Mammary epithelial cell (primary cell): ENCODE measurements at regions of chr10 and their contacts with region 1.

Region 1: GRCh38 chr10:53314876-53315275 is 542.3 kb upstream of the MBL2 start:
- DNase-seq: peak; percentile 87
- H3K4me3 ChIP-seq: no peak overlapping the region
- H3K27ac ChIP-seq: peak overlapping the region; percentile 39
- H3K4me1 ChIP-seq: no peaks in the 10 kb centered on the region
- H3K27me3 ChIP-seq: no peaks in the 10 kb centered on the region
- CTCF ChIP-seq: no peak

Region 2: GRCh38 chr10:52818019-52818418 is 496.9 kb before region 1 on chr10:
- CTCF ChIA-PET with region 1: interaction called, 3 read pairs
- dilution Hi-C with region 1: no loop called
- in situ Hi-C with region 1: no loop called
- intact Hi-C with region 1: loop called (anchors 1 kb)
- DNase-seq: peak; percentile 79
- H3K4me3 ChIP-seq: no peak overlapping the region
- H3K27ac ChIP-seq: peak overlapping the region; percentile 22
- H3K4me1 ChIP-seq: peaks cover 5% of the 10 kb centered on the region
- H3K27me3 ChIP-seq: no peaks in the 10 kb centered on the region
- CTCF ChIP-seq: peak; percentile 74 to 81

Region 3: DNA sequence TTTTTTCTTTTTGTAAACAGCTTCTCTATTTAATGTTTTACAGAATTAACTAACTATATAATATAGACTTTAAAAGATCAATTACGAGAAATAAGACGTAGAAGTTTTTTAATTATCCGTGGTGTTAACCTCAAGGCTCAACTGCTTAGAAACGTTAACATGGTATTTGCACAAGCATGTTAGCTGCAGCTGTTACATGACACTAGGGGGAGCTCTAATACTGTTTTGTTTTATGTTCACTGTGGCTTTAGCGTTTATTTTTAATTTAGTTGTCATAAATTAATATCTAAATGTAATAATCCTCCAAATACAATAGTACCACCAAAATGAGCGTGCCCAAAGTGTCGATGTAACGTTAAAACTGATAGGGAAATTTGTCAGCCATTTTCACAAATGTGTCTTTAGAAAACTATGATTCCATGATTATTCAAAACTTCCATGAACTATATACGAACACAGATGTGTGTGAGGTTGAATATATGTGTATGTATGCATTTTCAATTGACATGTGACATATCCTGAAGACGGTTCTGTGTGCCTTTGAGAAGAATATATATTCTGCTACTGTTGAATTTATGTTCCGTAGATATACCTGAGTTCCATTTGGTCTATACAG is 286.5 kb after region 1 on chr10:
- CTCF ChIA-PET with region 1: interaction called, 3 read pairs
- dilution Hi-C with region 1: no loop called
- in situ Hi-C with region 1: no loop called
- intact Hi-C with region 1: loop called (anchors 1 kb)
- DNase-seq: peak; percentile 16
- H3K4me3 ChIP-seq: no peak overlapping the region
- H3K27ac ChIP-seq: no peak overlapping the region
- H3K4me1 ChIP-seq: peaks cover 21% of the 10 kb centered on the region
- H3K27me3 ChIP-seq: no peaks in the 10 kb centered on the region
- CTCF ChIP-seq: peak; percentile 84 to 88

Region 4: DNA sequence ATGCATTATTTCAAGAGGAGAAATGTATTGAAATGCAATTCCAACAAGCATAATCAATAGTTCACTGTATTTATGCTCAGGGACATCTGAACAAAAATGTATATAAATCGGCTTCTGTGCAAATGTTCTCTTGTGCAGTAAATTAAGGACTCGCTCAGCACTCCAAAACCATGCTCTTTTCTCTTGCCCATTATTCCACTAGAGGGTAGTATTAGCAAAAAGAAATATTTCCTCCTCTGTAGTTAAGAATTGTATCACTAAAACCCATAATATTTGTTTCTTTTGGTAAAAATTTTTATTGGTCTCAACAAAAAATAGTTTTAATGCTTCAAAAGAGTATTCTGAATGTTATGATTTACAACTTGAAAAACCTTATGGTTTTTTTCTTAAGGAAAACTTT is 683.1 kb after region 1 on chr10:
- CTCF ChIA-PET with region 1: no interaction called
- dilution Hi-C with region 1: no loop called
- in situ Hi-C with region 1: no loop called
- intact Hi-C with region 1: loop called (anchors 10 kb)
- DNase-seq: peak; percentile 0
- H3K4me3 ChIP-seq: no peak overlapping the region
- H3K27ac ChIP-seq: no peak overlapping the region
- H3K4me1 ChIP-seq: no peaks in the 10 kb centered on the region
- H3K27me3 ChIP-seq: no peaks in the 10 kb centered on the region
- CTCF ChIP-seq: peak in 1 of 2 donors; percentile 44

Region 5: DNA sequence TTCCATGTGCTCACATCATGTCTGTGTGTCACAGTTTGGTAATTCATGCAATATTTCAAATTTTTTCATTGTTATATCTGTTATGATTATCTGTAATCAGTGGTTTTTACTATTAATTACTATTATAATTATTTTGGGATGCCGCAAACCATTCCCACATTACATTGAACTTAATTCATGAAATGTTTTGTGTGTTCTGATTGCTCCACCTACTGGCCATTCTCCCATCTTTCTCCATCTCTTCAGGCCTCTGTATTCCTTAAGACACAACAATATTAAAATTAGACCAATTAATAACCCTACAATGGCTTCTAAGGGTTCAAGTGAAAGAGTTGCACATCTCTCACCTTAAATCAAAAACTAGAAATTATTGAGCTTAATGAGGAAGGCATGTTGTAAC is 1087.7 kb after region 1 on chr10:
- CTCF ChIA-PET with region 1: no interaction called
- dilution Hi-C with region 1: no loop called
- in situ Hi-C with region 1: no loop called
- intact Hi-C with region 1: loop called (anchors 2 kb)
- DNase-seq: peak; percentile 32
- H3K4me3 ChIP-seq: no peak overlapping the region
- H3K27ac ChIP-seq: no peak overlapping the region
- H3K4me1 ChIP-seq: no peaks in the 10 kb centered on the region
- H3K27me3 ChIP-seq: peaks cover 2% of the 10 kb centered on the region
- CTCF ChIP-seq: peak; percentile 31 to 59